GM12878 (cell line): ENCODE measurements at regions of chr7 and their contacts with region 1.

Region 1: GRCh38 chr7:140924019-140924820 is 509 bp downstream of the BRAF start:
- DNase-seq: peak; percentile 50
- ATAC-seq: peak; percentile 89
- H3K4me3 ChIP-seq: peak overlapping the region; percentile 98
- H3K27ac ChIP-seq: peak overlapping the region; percentile 94
- H3K4me1 ChIP-seq: no peaks in the 10 kb centered on the region
- H3K27me3 ChIP-seq: no peaks in the 10 kb centered on the region
- CTCF ChIP-seq: peak; percentile 44 to 60 (median 45)
- EP300 ChIP-seq: peak in 1 of 2 experiments; percentile 42; a peak in 1 of 4 replicates
- POLR2A ChIP-seq: peak; percentile 75
- RAD21 ChIP-seq: no peak

Region 2: DNA sequence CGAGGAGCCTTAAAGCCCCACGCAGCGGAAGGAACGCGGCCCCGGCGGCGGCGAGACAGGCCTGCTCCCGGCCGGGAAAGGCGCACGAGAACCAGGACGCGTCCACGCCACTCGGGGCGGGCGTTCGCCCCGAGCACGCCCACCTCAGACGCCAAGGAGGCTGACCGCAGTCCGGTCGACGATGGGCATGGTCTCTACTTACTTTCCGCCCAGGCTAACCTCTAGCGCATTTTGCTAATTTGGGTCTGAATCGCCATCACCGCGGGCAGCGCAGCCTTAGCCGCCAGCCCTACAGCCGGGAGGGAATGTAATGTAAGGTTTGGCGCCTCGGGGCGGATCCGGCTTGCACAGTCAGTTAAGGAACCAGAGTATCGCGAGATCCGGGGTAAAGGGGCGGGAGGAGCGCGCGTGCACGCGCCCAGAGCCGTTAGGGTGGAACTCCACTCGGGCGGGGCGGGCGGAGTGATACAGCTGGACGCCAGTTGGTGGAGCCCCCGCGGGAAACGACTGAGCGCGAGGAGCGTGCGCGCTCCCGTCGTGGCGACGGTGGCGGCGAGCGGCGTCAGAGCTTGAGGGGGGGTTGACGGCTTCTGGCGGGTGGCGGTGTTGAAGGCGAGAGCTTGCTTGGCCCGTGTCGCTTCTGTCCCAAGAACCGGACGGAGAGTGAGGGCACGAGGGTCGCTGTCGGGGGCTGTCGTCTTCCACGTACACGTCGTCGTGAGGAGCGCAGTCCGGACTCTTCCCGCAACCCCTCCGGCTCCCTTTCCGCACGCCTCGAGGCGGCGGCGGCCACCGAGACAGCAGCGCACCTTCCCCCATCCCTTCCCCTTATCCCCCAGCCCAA is 1564.6 kb before region 1 on chr7 and contains the start of gene LUC7L2:
- CTCF ChIA-PET with region 1: no interaction called
- POLR2A ChIA-PET with region 1: no interaction called
- RAD21 ChIA-PET with region 1: no interaction called
- SMC1A ChIA-PET with region 1: no interaction called
- in situ Hi-C with region 1: loop called (anchors 25 kb)
- intact Hi-C with region 1: no loop called
- DNase-seq: peak; percentile 94
- ATAC-seq: peak; percentile 84
- H3K4me3 ChIP-seq: peak within 1 kb of the TSS; percentile 95
- H3K27ac ChIP-seq: peak within 1 kb of the TSS; percentile 98
- H3K4me1 ChIP-seq: no peaks in the 10 kb centered on the region
- H3K27me3 ChIP-seq: no peaks in the 10 kb centered on the region
- CTCF ChIP-seq: peak in 1 of 3 experiments; percentile 7; a peak in 2 of 6 replicates
- EP300 ChIP-seq: peak in 1 of 2 experiments; percentile 36; a peak in 1 of 4 replicates
- POLR2A ChIP-seq: peak; percentile 97
- RAD21 ChIP-seq: no peak
- polyA plus RNA-seq, gene LUC7L2: 31.7 to 37.8 TPM

Region 3: GRCh38 chr7:140696680-140697446 is 227.4 kb before region 1 on chr7 and contains the start of gene NDUFB2:
- CTCF ChIA-PET with region 1: no interaction called
- POLR2A ChIA-PET with region 1: no interaction called
- RAD21 ChIA-PET with region 1: no interaction called
- SMC1A ChIA-PET with region 1: no interaction called
- in situ Hi-C with region 1: no loop called
- intact Hi-C with region 1: loop called (anchors 5 kb)
- DNase-seq: peak; percentile 57
- ATAC-seq: peak; percentile 93
- H3K4me3 ChIP-seq: peak within 1 kb of the TSS; percentile 77
- H3K27ac ChIP-seq: peak within 1 kb of the TSS; percentile 90
- H3K4me1 ChIP-seq: peaks cover 11% of the 10 kb centered on the region
- H3K27me3 ChIP-seq: no peaks in the 10 kb centered on the region
- CTCF ChIP-seq: no peak
- EP300 ChIP-seq: no peak
- POLR2A ChIP-seq: peak; percentile 95
- RAD21 ChIP-seq: no peak
- polyA plus RNA-seq, gene NDUFB2: 1,189 to 1,236 TPM

Region 4: DNA sequence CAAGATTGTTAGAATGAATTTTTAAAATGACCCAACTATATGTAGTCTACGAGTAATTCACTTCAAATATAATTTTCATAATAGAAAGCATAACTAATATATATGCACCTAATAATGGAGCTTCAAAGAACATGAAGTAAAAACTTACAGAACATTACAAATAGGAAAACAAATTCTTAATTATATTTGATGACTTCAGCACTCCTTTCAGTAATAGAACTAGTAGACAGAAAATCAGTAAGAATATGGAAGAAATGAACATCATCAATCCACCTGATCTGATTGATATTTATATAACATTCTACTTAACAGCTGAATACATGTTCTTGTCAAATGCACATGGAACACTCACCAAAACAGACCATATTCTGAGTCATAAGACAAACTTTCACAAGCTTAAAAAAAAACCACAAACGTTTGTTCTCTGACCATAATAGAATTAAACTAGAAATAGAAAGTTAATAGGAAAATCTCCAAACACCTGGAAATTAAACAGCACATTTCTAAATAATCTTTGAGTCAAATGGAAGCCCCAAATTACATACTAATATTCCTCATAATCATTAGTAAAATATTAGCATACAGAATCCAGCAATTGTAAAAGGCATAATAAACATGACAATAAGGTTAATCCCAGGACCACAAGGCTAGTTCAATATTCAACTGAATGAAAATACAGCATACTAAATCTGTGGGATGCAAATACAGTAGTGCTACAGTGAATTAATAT is 47.5 kb before region 1 on chr7:
- CTCF ChIA-PET with region 1: interaction called, 4 read pairs
- POLR2A ChIA-PET with region 1: interaction called, 5 read pairs
- RAD21 ChIA-PET with region 1: interaction called, 4 read pairs
- SMC1A ChIA-PET with region 1: interaction called, 6 read pairs
- in situ Hi-C with region 1: no loop called
- intact Hi-C with region 1: loop called (anchors 2 kb)
- DNase-seq: peak; percentile 47
- ATAC-seq: peak; percentile 83
- H3K4me3 ChIP-seq: no peak overlapping the region
- H3K27ac ChIP-seq: no peak overlapping the region
- H3K4me1 ChIP-seq: peaks cover 19% of the 10 kb centered on the region
- H3K27me3 ChIP-seq: no peaks in the 10 kb centered on the region
- CTCF ChIP-seq: no peak
- EP300 ChIP-seq: peak; percentile 55 to 63; a peak in 3 of 4 replicates
- POLR2A ChIP-seq: no peak
- RAD21 ChIP-seq: no peak

Region 5: GRCh38 chr7:140902303-140902953 is 21.8 kb before region 1 on chr7:
- CTCF ChIA-PET with region 1: interaction called, 4 read pairs
- POLR2A ChIA-PET with region 1: interaction called, 6 read pairs
- RAD21 ChIA-PET with region 1: interaction called, 5 read pairs
- SMC1A ChIA-PET with region 1: interaction called, 12 read pairs
- in situ Hi-C with region 1: no loop called
- intact Hi-C with region 1: loop called (anchors 1 kb)
- DNase-seq: peak; percentile 48
- ATAC-seq: peak; percentile 79
- H3K4me3 ChIP-seq: 0 out of 2 replicates have a peak overlapping the region, but pooled peaks have one; percentile 24
- H3K27ac ChIP-seq: peak overlapping the region; percentile 52; the same call in 1 of the 2 replicates
- H3K4me1 ChIP-seq: peaks cover 8% of the 10 kb centered on the region; the same call in 1 of the 2 replicates
- H3K27me3 ChIP-seq: no peaks in the 10 kb centered on the region
- CTCF ChIP-seq: no peak
- EP300 ChIP-seq: peak; percentile 44 to 51; a peak in 1 of 4 replicates
- POLR2A ChIP-seq: no peak
- RAD21 ChIP-seq: no peak

Region 6: DNA sequence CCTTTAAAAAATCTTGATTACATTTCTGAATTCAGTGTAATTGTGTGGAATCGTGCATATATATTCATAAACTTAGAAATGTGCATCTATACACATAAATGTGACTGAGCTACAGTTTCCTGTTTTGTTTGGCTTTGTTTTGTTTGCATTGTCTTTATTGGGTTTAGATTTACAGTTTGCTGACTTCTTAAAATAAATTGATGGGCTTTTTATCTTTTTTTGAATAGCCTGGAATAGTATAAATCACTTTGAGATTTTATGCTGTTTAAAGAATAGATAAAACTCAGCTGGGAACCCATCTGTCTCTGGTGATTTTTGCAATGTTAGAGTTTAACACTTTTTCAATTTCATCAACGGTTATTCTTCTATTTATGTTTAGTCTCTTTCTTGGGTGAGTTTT is 21.7 kb after region 1 on chr7:
- CTCF ChIA-PET with region 1: no interaction called
- POLR2A ChIA-PET with region 1: no interaction called
- RAD21 ChIA-PET with region 1: no interaction called
- SMC1A ChIA-PET with region 1: no interaction called
- in situ Hi-C with region 1: no loop called
- intact Hi-C with region 1: no loop called
- DNase-seq: no peak
- ATAC-seq: no peak
- H3K4me3 ChIP-seq: no peak overlapping the region
- H3K27ac ChIP-seq: no peak overlapping the region
- H3K4me1 ChIP-seq: no peaks in the 10 kb centered on the region
- H3K27me3 ChIP-seq: no peaks in the 10 kb centered on the region
- CTCF ChIP-seq: no peak
- EP300 ChIP-seq: no peak
- POLR2A ChIP-seq: no peak
- RAD21 ChIP-seq: no peak

Region 7: GRCh38 chr7:140989068-140989467 is 64.8 kb after region 1 on chr7:
- CTCF ChIA-PET with region 1: no interaction called
- POLR2A ChIA-PET with region 1: no interaction called
- RAD21 ChIA-PET with region 1: no interaction called
- SMC1A ChIA-PET with region 1: no interaction called
- in situ Hi-C with region 1: no loop called
- intact Hi-C with region 1: no loop called
- DNase-seq: no peak
- ATAC-seq: peak; percentile 20; the same call in 2 of the 3 replicates
- H3K4me3 ChIP-seq: no peak overlapping the region
- H3K27ac ChIP-seq: no peak overlapping the region
- H3K4me1 ChIP-seq: no peaks in the 10 kb centered on the region
- H3K27me3 ChIP-seq: no peaks in the 10 kb centered on the region
- CTCF ChIP-seq: no peak
- EP300 ChIP-seq: no peak
- POLR2A ChIP-seq: no peak
- RAD21 ChIP-seq: no peak